ENCODE measurements at regions of chr21 and their contacts with region 1.

Region 1: GRCh38 chr21:29306920-29307319 is 8.2 kb downstream of the BACH1 start:
- DNase-seq: no peak
- ATAC-seq: peak; percentile 69
- H3K4me3 ChIP-seq: no peak overlapping the region
- H3K27ac ChIP-seq: peak overlapping the region; percentile 78
- H3K4me1 ChIP-seq: peaks cover 12 to 68% of the 10 kb centered on the region in 2 experiments; a peak in 4 of 5 replicates
- H3K27me3 ChIP-seq: no peaks in the 10 kb centered on the region
- CTCF ChIP-seq: no peak
- EP300 ChIP-seq: no peak
- POLR2A ChIP-seq: no peak
- RAD21 ChIP-seq: no peak

Region 2: GRCh38 chr21:29265690-29266479 is 41.0 kb before region 1 on chr21:
- CTCF ChIA-PET with region 1: no interaction called
- POLR2A ChIA-PET with region 1: no interaction called
- in situ Hi-C with region 1: no loop called
- intact Hi-C with region 1: no loop called
- DNase-seq: no peak
- ATAC-seq: no peak; the same call in 2 of the 3 replicates
- H3K4me3 ChIP-seq: no peak overlapping the region
- H3K27ac ChIP-seq: no peak overlapping the region
- H3K4me1 ChIP-seq: no peaks in the 10 kb centered on the region
- H3K27me3 ChIP-seq: no peaks in the 10 kb centered on the region
- CTCF ChIP-seq: no peak
- EP300 ChIP-seq: no peak
- POLR2A ChIP-seq: no peak
- RAD21 ChIP-seq: no peak

Region 3: GRCh38 chr21:29318354-29318753 is 11.4 kb after region 1 on chr21:
- CTCF ChIA-PET with region 1: no interaction called
- POLR2A ChIA-PET with region 1: interaction called, 220 read pairs
- in situ Hi-C with region 1: no loop called
- intact Hi-C with region 1: no loop called
- DNase-seq: no peak
- ATAC-seq: no peak
- H3K4me3 ChIP-seq: no peak overlapping the region
- H3K27ac ChIP-seq: no peak overlapping the region
- H3K4me1 ChIP-seq: peaks cover 8 to 53% of the 10 kb centered on the region in 2 experiments; a peak in 4 of 5 replicates
- H3K27me3 ChIP-seq: no peaks in the 10 kb centered on the region
- CTCF ChIP-seq: no peak
- EP300 ChIP-seq: no peak
- POLR2A ChIP-seq: no peak
- RAD21 ChIP-seq: no peak

Region 4: DNA sequence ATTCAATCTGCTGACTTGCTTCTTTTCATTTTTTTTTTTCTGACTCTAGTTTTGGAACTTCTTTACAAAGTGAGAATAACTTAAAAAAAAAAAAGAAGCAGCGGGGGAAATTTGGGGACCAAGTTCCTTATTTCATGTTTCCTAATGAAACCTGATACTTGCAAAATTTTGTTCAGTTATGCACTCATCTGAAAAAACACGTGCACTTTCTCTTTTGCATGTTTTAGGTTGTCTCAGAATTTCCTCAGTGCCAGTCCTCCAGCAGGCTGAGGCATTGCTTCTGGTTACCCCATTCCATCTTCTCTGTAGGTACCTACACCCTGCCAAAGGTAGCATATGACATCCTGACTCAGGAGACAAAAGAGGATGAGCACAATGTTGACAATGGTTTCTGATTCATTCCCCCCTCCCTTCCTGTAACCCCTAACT is 333.2 kb after region 1 on chr21:
- CTCF ChIA-PET with region 1: no interaction called
- POLR2A ChIA-PET with region 1: no interaction called
- in situ Hi-C with region 1: loop called (anchors 5 kb)
- intact Hi-C with region 1: no loop called
- DNase-seq: no peak
- ATAC-seq: no peak
- H3K4me3 ChIP-seq: no peak overlapping the region
- H3K27ac ChIP-seq: peak overlapping the region; percentile 98
- H3K4me1 ChIP-seq: peaks cover 19 to 81% of the 10 kb centered on the region in 2 experiments
- H3K27me3 ChIP-seq: no peaks in the 10 kb centered on the region
- CTCF ChIP-seq: no peak
- EP300 ChIP-seq: no peak
- POLR2A ChIP-seq: no peak
- RAD21 ChIP-seq: no peak

Region 5: DNA sequence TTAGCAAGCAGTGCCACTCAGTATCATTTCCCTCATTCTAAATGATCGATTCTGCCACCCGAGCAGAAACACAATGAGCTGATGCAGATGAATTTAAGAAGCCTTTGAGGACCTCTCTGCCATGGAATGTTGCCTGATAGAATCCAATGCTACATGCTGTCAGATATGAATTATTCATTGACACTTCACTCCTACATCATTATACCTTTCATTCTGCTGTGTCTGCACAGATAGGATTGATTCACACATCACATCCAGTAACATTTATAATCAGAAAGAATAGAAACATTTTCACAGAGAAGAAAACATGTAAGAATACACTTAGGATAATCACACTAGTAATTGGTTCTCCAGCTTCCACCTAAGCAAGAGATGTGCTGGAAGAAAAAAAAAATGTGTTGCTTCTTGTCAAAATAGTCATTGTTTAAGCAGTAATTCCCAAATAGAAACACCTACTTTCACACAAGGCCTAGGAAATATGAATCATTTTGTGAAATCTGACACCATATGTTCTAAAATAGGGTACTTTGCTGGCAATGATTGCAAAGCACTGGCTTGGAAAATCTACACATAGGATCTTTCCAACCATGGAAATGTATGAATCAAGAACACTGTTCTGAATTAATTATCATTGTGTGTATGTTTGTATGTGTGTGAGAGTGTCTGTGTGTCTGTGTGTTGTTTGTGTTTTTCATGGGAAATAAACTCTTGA is 522.8 kb after region 1 on chr21:
- CTCF ChIA-PET with region 1: no interaction called
- POLR2A ChIA-PET with region 1: no interaction called
- in situ Hi-C with region 1: no loop called
- intact Hi-C with region 1: no loop called
- DNase-seq: no peak
- ATAC-seq: no peak
- H3K4me3 ChIP-seq: no peak overlapping the region
- H3K27ac ChIP-seq: no peak overlapping the region
- H3K4me1 ChIP-seq: no peaks in the 10 kb centered on the region
- H3K27me3 ChIP-seq: no peaks in the 10 kb centered on the region
- CTCF ChIP-seq: no peak
- EP300 ChIP-seq: no peak
- POLR2A ChIP-seq: no peak
- RAD21 ChIP-seq: no peak

Measured in K562 (cell line).